ENCODE measurements at regions of chr22 and their contacts with region 1.

Region 1: GRCh38 chr22:37199103-37199759 is 11.2 kb upstream of the C1QTNF6 start:
- H3K4me3 ChIP-seq: peak overlapping the region; percentile 48
- H3K27ac ChIP-seq: peak overlapping the region; percentile 92
- H3K4me1 ChIP-seq: 0 out of 2 replicates have a peak, but pooled peaks cover 6% of the 10 kb centered on the region
- CTCF ChIP-seq: peak; percentile 91

Region 2: DNA sequence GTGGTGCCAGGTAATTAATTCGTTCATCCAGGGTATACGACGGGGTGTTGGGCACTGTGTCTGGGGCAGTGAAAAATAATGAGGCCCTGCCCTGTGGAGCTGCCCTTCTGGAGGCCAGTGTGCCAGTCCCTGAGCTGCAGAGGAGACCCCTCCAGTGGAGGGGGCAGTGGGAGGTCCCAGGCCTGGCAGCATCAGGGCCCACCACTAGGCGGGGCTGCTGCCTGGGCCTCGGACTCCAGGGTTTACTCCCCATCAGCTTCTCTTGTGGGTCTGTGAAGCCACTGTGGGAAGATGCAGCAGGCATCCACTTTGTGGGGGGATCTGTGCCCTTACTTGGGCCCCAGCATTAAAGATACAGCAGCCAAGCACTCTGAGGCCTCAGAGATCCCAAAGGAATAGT is 72.3 kb before region 1 on chr22:
- CTCF ChIA-PET with region 1: interaction called, 22 read pairs
- POLR2A ChIA-PET with region 1: no interaction called
- H3K4me3 ChIP-seq: no peak overlapping the region
- H3K27ac ChIP-seq: no peak overlapping the region
- H3K4me1 ChIP-seq: no peaks in the 10 kb centered on the region
- CTCF ChIP-seq: peak; percentile 37; the same call in 1 of the 2 replicates

Region 3: DNA sequence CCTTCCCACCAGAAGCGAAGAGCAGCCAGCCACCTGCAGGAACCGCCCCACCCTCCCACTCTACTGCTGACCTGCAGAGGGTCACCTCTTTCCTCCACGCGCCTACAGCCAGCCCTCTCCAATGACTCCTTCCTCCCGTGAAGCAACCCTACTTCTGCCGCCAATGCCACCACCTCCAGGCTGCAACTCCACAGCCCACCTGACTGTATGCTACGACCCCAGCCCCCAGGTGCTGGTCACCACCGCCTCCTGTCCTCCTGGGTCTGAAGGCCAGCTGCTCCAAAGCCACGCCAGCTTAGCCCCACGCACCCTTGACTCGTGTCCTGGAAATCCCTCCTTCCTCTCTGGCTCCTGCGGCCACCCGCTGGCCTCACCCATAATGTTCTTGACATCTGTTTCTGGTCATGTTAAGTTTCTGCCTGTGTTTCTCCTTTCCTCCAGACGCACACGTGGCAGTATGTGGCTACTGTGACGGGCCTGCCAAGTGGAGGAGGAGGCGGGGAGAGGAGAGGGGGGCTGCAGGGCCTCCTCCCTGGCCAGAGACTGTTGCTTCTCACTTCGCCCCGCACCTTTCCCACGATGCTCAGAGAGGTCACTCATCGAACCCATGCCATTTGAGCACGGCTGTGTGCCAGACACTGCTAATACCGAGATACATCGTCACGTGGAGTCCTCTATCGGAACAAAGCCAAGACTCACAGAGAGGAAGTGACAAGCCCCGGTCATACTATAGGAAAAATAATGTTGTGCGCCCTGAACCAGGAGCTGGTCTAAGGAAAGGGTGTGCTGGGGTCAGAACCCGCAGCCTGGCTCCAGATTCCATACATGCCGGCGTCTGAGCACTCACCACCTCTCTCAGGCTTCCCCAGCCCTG is 22.8 kb before region 1 on chr22:
- CTCF ChIA-PET with region 1: interaction called, 14 read pairs
- POLR2A ChIA-PET with region 1: interaction called, 4 read pairs
- H3K4me3 ChIP-seq: no peak overlapping the region
- H3K27ac ChIP-seq: no peak overlapping the region
- H3K4me1 ChIP-seq: no peaks in the 10 kb centered on the region; the same call in 1 of the 2 replicates
- CTCF ChIP-seq: 0 out of 2 replicates have a peak, but pooled peaks have one; percentile 20

Region 4: DNA sequence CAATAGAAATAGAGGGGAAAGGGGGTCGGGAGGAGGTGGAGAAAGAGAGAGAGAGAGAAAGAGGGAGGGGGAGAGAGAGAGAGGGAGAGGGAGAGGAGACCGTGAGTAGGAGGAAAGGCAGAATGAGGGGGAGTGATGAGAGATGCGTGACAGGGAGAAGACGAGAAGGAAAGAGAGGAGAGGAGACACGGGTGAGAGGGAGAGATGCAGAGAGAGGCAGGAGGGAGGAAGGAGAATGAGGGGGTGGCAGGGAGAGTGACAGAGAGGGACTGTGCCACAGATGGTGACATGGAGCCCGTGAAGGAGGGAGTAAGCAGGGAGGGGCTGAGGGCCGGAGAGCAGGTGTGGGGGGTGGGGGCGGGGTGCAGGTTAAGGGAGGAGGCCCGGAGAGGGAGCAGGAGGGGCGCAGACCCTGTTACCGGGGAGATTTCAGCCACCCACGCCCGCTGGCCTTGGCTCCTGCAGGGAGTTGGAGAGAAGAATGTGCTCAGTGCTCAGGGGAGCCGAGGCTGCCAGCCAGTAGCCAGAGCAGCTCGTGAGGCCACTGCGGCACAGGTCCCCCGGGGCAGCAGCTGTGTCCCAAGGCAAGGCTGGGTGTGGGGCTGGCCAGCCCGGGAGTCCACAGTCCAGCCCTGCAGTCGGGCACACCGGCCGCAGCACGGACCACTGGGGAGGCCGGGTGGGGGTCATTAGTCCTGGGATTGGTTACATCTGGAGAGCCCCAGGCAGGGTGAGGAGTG is 13.1 kb after region 1 on chr22 and contains the start of gene SSTR3:
- CTCF ChIA-PET with region 1: interaction called, 24 read pairs
- POLR2A ChIA-PET with region 1: interaction called, 7 read pairs
- H3K4me3 ChIP-seq: no peak within 1 kb of the TSS
- H3K27ac ChIP-seq: no peak within 1 kb of the TSS
- H3K4me1 ChIP-seq: no peaks in the 10 kb centered on the region
- CTCF ChIP-seq: no peak

Region 5: GRCh38 chr22:37229805-37230672 is 30.8 kb after region 1 on chr22:
- CTCF ChIA-PET with region 1: interaction called, 19 read pairs
- POLR2A ChIA-PET with region 1: no interaction called
- H3K4me3 ChIP-seq: no peak overlapping the region
- H3K27ac ChIP-seq: no peak overlapping the region
- H3K4me1 ChIP-seq: no peaks in the 10 kb centered on the region
- CTCF ChIP-seq: no peak

Region 6: DNA sequence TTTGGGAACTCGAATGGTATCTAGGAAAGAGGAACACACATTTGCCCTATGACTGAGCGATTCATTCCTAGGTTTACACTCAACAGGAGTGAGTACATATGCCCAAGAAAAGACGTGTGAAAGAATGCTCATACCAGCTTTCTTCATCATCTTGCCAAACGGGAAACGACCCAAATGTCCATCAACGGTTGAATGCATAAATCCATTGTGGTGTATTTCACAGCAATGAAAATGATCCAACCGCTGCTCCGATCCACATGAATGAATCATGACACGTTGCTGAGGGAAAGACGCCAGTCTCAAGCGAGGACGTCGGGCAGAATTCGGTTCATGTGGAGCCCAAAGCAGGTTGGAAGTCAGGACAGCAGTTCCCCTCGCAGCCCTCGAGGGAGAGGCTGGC is 154.6 kb after region 1 on chr22:
- CTCF ChIA-PET with region 1: no interaction called
- POLR2A ChIA-PET with region 1: no interaction called
- H3K4me3 ChIP-seq: no peak overlapping the region
- H3K27ac ChIP-seq: no peak overlapping the region
- H3K4me1 ChIP-seq: no peaks in the 10 kb centered on the region
- CTCF ChIP-seq: no peak

Region 7: DNA sequence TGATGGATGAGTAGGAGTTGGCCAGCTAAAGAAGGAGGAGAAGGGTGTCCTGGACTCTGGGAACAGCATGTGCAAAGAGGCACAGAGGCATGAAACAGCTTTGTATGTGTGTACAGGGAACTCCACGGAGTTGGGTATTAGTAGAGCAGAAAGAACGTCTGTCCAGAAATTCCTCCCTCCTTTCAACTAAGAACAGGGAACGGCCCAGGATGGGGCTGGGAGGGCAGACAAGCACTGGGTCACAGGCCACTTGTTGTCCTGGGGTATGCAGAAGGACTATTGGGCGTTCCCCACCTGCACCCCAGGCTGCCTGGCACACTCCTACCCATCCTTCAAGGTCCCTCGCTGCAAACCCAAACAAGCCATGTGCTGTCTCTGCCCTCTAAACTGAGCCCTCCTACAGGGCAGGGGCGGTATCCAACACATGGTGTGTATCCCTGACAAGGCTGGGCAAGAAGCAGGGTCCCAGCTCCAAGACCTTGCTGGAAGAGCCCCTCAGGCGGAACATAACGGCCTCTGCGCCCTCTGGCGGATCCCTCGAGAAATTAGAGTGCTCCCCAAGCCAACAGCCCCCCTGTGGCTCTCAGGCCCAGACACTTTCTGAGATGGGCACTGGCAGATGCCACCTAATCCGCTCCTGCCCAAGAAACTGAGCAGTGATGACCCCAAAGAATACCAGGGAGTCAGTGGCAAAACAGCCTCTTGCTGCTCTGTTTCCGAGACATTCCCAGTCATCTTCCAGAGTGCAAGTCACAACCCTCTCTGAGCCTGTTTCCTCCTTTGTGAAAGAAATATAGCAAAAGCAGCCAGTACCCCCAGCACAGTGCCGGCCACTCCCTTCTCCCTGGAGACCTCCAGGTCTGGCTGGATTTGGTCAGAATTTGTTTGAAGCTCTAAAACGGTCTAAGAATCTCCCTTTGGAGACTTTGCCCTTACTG is 229.7 kb after region 1 on chr22:
- CTCF ChIA-PET with region 1: no interaction called
- POLR2A ChIA-PET with region 1: no interaction called
- H3K4me3 ChIP-seq: no peak overlapping the region
- H3K27ac ChIP-seq: no peak overlapping the region
- H3K4me1 ChIP-seq: no peaks in the 10 kb centered on the region
- CTCF ChIP-seq: peak; percentile 63